ENCODE measurements at regions of chr5 and their contacts with region 1.

Region 1: GRCh38 chr5:55278778-55279177 is 28.7 kb downstream of the DHX29 start:
- DNase-seq: no peak
- ATAC-seq: no peak
- H3K4me3 ChIP-seq: no peak overlapping the region
- H3K27ac ChIP-seq: no peak overlapping the region
- H3K4me1 ChIP-seq: no peaks in the 10 kb centered on the region
- H3K27me3 ChIP-seq: no peaks in the 10 kb centered on the region
- CTCF ChIP-seq: no peak

Region 2: DNA sequence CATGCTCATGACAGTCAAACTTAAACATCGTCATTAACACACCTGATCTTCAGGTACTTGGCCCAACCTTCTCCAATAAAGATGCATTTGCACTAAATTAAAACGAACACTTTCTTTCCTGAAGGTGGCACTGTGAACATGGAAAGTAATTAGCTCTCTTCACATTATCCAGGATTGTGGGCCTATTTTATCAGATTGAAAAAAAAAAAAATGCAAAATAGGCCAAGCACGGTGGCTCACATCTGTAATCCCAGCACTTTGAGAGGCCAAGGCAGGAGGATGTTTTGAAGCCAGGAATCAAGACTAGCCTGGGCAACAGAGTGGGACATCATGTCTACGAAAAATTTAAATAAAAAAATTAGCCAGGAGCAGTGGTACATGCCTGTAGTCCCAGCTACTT is 91.4 kb before region 1 on chr5:
- intact Hi-C with region 1: no loop called
- DNase-seq: no peak
- ATAC-seq: no peak
- H3K4me3 ChIP-seq: no peak overlapping the region
- H3K27ac ChIP-seq: no peak overlapping the region
- H3K4me1 ChIP-seq: no peaks in the 10 kb centered on the region
- H3K27me3 ChIP-seq: peaks cover 0 to 99% (median 92%) of the 10 kb centered on the region in 7 donors
- CTCF ChIP-seq: peak in 2 of 9 donors; percentile 4 to 19

Region 3: GRCh38 chr5:55338810-55339243 is 60.0 kb after region 1 on chr5:
- intact Hi-C with region 1: no loop called
- DNase-seq: no peak
- ATAC-seq: peak in 3 of 8 donors; percentile 51 to 62 (median 59)
- H3K4me3 ChIP-seq: no peak overlapping the region
- H3K27ac ChIP-seq: no peak overlapping the region
- H3K4me1 ChIP-seq: peaks cover 0 to 16% (median 0%) of the 10 kb centered on the region in 9 donors
- H3K27me3 ChIP-seq: no peaks in the 10 kb centered on the region
- CTCF ChIP-seq: no peak

Region 4: DNA sequence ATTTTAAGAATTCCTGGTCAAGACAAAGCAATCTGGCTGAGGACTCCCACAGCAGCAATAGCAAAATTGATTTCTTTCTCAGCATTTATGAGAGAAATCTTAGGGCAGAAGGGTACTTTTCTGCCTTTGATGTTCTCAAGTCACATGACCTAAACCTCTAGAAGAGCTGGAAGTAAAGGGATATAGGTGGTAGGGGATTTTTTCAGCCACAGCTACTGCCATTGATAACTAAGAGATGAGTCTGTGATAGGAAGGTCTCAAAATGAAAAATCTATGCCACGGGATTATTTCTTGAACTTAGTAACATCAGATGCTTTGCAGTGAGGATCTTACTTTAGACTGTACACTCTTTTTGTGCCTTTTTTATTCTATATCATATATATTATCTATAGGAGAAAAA is 680.4 kb after region 1 on chr5:
- intact Hi-C with region 1: loop called in 1 of 10 experiments (anchors 10 kb)
- DNase-seq: no peak
- ATAC-seq: no peak
- H3K4me3 ChIP-seq: no peak overlapping the region
- H3K27ac ChIP-seq: no peak overlapping the region
- H3K4me1 ChIP-seq: no peaks in the 10 kb centered on the region
- H3K27me3 ChIP-seq: no peaks in the 10 kb centered on the region
- CTCF ChIP-seq: no peak